HEK293 (cell line): ENCODE measurements at regions of chr3 and their contacts with region 1.

Region 1: DNA sequence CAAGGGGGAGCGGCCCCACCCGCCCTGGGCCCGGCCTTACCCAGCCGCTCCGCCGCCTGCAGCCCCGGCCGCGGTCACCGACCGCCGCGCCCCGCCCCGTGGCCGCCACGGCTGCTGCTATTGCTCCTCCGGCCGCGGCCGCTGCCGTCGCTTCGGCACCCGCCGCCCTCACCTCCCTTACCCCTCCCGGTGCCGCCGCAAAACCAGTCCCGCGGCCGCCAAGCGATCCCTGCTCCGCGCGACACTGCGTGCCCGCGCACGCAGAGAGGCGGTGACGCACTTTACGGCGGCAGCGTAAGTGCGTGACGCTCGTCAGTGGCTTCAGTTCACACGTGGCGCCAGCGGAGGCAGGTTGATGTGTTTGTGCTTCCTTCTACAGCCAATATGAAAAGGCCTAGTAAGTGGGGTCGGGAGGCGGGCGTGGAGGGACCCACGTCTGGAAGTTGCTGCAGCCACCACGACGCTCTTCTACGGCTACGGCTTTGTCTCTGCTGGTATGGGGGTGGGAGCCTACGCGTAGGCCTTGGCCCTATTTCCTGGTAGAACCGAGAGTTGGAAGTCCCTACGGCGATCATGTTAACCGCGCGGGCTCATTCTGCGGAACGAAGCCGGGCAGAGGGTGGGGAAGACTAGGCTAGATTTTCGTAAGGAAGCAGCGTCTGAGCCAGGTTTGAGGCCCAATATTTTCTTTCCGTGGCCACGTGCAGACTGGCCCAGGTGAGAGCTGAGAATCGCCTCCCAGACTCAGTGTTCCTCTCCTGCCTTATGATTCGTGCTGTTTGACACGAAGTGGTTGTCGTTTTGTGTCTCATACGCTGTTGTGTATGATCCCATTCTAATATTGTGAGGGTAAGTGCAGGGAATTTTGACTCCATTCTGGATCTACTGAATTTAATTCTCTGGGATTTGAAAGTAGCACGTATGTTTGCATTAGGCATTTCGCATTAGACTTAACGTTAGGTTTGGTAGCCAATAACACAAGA is at the starts of genes GNL3 and PBRM1:
- H3K4me3 ChIP-seq: peak within 1 kb of the TSS; percentile 89
- H3K27ac ChIP-seq: peak within 1 kb of the TSS; percentile 87
- H3K4me1 ChIP-seq: peaks cover 2% of the 10 kb centered on the region; the same call in 1 of the 2 replicates
- CTCF ChIP-seq: peak; percentile 32; the same call in 1 of the 2 replicates

Region 2: GRCh38 chr3:52544937-52545336 is 141.1 kb before region 1 on chr3:
- CTCF ChIA-PET with region 1: no interaction called
- POLR2A ChIA-PET with region 1: no interaction called
- H3K4me3 ChIP-seq: no peak overlapping the region
- H3K27ac ChIP-seq: no peak overlapping the region
- H3K4me1 ChIP-seq: no peaks in the 10 kb centered on the region
- CTCF ChIP-seq: no peak

Region 3: DNA sequence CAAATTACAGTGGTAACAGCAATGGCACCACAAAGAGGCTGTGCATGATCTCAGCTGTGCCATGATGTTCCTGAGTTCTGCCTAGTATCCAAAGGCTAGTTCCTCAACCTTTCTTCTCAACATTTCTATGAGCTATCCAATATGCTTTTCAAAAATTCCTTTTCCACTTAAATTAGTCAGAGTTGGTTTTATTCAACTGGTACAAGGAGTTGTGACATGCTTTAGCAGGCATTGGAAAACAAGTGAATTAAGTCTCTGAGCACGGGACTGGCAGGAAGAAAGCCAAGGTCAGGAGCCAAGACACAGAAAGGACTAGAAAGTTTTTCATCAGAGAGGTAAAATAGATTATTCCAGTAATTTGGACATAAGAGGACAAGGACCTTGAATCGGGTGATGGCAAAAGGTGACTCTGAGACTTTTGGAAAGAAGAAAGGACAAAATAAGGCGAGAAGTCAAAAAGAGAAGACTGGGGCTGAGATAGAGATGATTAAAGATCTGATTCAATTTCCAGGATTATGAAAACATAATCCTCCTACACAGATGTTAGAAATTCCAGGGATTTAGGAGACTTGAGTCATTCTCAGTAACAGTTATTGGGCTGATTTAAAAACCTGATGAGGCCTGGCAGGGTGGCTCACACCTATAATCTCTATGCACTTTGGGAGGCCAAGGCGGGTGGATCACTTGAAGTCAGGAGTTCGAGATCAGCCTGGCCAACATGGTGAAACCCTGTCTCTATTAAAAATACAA is 36.4 kb before region 1 on chr3:
- CTCF ChIA-PET with region 1: no interaction called
- POLR2A ChIA-PET with region 1: no interaction called
- H3K4me3 ChIP-seq: no peak overlapping the region
- H3K27ac ChIP-seq: no peak overlapping the region
- H3K4me1 ChIP-seq: no peaks in the 10 kb centered on the region
- CTCF ChIP-seq: no peak

Region 4: GRCh38 chr3:52705688-52706686 is 20.0 kb after region 1 on chr3 and contains the starts of genes GLT8D1 and SPCS1:
- CTCF ChIA-PET with region 1: no interaction called
- POLR2A ChIA-PET with region 1: interaction called, 13 read pairs
- H3K4me3 ChIP-seq: peak within 1 kb of the TSS; percentile 100
- H3K27ac ChIP-seq: peak within 1 kb of the TSS; percentile 64
- H3K4me1 ChIP-seq: peaks cover 3% of the 10 kb centered on the region; the same call in 1 of the 2 replicates
- CTCF ChIP-seq: no peak